ENCODE measurements at regions of chr17 and their contacts with region 1.

Region 1: DNA sequence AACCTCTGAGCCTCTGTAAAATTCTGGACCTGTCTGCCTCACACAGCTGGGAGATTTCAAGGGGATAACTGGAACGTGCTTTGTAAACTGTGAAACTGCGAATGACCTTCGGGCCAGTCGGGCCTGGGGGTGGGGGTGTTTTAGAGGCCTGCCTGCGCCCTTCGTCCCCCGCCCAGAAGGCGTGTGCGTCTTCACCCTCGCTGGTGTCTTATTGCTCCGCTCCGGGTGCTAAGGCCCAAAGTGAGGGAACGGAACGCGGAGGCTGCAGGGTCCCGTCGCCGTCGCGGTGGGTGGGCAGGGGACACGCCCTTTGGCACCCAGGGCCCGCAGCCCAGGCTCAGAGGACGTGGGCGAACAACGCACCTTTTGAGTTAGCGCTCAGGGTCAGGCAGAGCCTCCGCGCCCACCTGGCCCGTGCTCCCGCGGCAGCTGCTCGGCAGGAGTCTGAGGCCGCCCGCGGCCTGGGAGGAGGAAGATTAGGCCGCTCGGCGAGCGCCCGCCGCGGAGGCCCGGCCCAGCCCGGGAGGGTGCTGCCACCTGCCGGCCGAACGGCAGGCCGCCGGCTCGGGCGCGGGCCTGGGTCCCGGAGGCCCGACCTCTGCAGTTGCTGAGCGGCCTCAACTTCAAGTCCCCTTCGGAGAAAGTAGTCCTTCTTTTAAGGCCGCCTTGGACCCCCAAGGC is 29.7 kb downstream of the DCAKD start:
- DNase-seq: no peak
- H3K4me3 ChIP-seq: peak overlapping the region; percentile 53
- CTCF ChIP-seq: peak; percentile 64

Region 2: DNA sequence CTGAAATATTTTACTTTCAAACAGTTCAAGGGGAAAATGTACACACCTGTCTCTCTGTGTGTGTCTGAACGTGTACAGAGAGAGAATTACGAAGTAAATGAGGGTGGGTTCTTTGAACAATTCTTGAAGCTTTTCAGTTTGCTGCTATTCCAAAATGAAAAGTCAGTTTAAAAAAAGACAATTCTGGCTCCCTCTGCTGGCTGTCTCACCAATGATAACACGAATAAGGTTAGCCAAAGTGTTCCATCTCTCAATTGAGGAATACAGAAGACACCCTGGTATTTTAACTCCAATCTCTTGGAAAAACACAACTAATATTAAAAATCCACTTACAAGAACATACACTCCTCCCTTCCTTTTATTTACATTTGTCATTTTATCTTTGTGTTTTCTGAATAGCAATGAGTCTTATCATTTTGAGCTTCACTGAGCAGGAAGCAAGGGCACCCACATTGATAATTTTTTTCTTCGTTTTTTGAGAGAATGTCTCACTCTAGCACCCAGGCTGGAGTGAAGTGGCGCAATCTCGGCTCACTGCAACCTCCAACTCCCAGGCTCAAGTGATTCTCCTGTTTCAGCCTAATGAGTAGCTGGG is 143.0 kb before region 1 on chr17:
- CTCF ChIA-PET with region 1: interaction called, 68 read pairs
- POLR2A ChIA-PET with region 1: no interaction called
- DNase-seq: no peak
- H3K4me3 ChIP-seq: no peak overlapping the region
- CTCF ChIP-seq: peak; percentile 53

Region 3: GRCh38 chr17:44919885-44920564 is 101.7 kb before region 1 on chr17:
- CTCF ChIA-PET with region 1: interaction called, 673 read pairs
- POLR2A ChIA-PET with region 1: interaction called, 4 read pairs
- DNase-seq: no peak
- H3K4me3 ChIP-seq: no peak overlapping the region
- CTCF ChIP-seq: peak; percentile 94

Region 4: DNA sequence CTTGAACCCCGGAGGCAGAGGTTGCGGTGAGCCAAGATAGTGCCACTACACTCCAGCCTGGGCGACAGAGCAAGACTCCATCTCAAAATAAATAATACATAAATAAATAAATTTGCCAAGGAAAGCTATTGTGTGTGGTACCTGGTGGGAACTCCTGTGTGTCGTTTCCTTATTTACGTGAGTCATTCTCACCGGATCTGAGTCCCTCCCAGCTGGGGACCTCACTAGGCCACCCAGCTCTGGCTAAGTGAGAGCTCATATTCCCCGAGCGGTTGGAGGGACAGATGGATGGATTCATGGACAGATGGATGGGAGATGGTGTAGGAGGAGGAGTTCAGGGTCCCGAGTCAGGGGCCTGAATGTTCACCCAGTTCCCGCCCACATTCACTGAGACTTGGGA is 30.8 kb before region 1 on chr17:
- CTCF ChIA-PET with region 1: interaction called, 10 read pairs
- POLR2A ChIA-PET with region 1: no interaction called
- DNase-seq: no peak
- H3K4me3 ChIP-seq: no peak overlapping the region
- CTCF ChIP-seq: no peak

Region 5: GRCh38 chr17:45038728-45039634 is 17.2 kb after region 1 on chr17:
- CTCF ChIA-PET with region 1: interaction called, 186 read pairs
- POLR2A ChIA-PET with region 1: interaction called, 5 read pairs
- DNase-seq: no peak
- H3K4me3 ChIP-seq: no peak overlapping the region
- CTCF ChIP-seq: no peak